Stomach (tissue), 19 donors: ENCODE measurements at regions of chr14 and their contacts with region 1.

Region 1: GRCh38 chr14:60164712-60165546 is at the start of gene DHRS7:
- DNase-seq: peak; percentile 85 to 95
- H3K4me3 ChIP-seq: peak within 1 kb of the TSS; percentile 76 to 84 (median 79)
- H3K27ac ChIP-seq: peak within 1 kb of the TSS; percentile 90 to 99 (median 96)
- H3K4me1 ChIP-seq: peaks cover 7 to 57% (median 27%) of the 10 kb centered on the region in 4 donors
- H3K27me3 ChIP-seq: no peaks in the 10 kb centered on the region
- CTCF ChIP-seq: peak in 4 of 7 experiments; percentile 16 to 52 (median 50)
- EP300 ChIP-seq: no peak
- POLR2A ChIP-seq: no peak
- total RNA-seq, gene DHRS7: 60.7 to 322 (median 158) TPM

Region 2: GRCh38 chr14:60091550-60092530 is 73.1 kb before region 1 on chr14 and contains the start of gene PCNX4:
- intact Hi-C with region 1: loop called (anchors 10 kb)
- DNase-seq: peak; percentile 97 to 100
- H3K4me3 ChIP-seq: peak within 1 kb of the TSS; percentile 61 to 72 (median 66)
- H3K27ac ChIP-seq: peak within 1 kb of the TSS; percentile 97 to 99 (median 99)
- H3K4me1 ChIP-seq: peaks cover 15 to 43% (median 32%) of the 10 kb centered on the region in 4 donors
- H3K27me3 ChIP-seq: no peaks in the 10 kb centered on the region
- CTCF ChIP-seq: no peak
- EP300 ChIP-seq: peak; percentile 87
- POLR2A ChIP-seq: peak in 2 of 4 donors; percentile 90 to 93
- total RNA-seq, gene PCNX4: 26.9 to 105 (median 70.5) TPM